Gastrocnemius medialis (tissue), 4 donors: ENCODE measurements at regions of chr10 and their contacts with region 1.

Region 1: DNA sequence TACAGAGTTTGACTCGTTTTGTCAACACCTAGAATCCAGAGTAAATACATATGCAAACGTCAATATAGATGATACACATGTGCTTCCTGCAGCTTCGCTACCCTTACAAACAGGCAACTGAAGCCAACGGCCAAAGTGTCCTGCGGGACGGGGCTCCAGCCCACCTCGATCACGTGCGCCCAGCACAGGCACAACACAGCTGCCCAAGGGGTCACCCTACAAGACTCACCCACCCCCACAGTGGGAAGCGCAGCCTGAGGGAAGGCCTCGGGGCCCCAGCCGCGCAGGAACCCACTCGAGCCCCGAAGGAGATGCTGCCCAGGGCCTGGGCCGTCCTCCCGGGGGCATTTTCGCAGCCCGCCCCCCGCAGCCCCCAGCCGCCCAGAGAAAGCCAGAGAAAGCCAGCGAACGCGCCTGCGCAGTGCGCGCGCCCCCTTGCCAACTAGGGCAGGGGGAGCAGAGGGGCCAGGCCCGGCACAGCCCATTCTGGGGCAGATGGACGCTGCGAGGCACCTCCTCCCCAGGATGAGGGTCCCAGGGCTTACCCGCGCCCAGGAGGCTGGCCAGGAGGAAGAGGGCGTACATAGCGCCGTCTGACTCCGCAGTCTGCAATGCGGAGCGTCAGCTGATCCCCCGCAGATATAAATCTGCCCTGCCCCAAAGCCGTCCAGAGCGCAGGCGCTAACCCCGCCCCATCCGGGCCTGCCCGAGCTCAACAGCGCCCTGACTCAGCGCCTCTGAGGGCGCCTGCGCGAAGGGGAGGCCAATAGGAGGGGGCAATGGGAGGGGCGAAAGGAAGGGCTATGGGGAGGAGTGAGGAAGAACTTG is at the start of gene PSAP:
- DNase-seq: peak; percentile 98 to 99
- ATAC-seq: peak; percentile 88 to 89
- H3K4me3 ChIP-seq: peak within 1 kb of the TSS; percentile 89 to 97 (median 91)
- H3K27ac ChIP-seq: peak within 1 kb of the TSS; percentile 94 to 99 (median 97)
- H3K4me1 ChIP-seq: peaks cover 48 to 49% of the 10 kb centered on the region in 2 donors
- H3K27me3 ChIP-seq: no peaks in the 10 kb centered on the region
- CTCF ChIP-seq: no peak
- POLR2A ChIP-seq: peak; percentile 100
- total RNA-seq, gene PSAP: 833 to 1,730 (median 1,179) TPM

Region 2: DNA sequence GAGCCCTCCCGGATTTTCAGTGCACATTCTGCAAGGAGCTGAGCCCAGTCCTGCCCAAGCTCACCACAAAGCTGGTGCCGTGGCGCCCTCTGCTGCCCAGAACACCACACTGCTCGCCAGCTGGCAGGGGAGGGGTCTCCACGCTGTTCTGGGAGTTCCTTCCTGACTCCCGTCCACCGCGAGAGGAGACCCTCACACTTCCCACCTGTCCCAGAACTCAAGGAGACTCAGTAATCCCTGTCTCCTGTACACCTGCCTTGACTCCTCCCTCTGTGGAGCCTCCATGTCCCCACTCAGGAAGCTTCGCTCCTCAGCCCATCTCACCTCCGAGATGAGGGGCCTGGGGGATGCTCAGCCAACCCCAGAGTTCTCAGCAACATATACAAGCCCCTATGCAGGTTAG is 142.5 kb before region 1 on chr10:
- in situ Hi-C with region 1: no loop called
- intact Hi-C with region 1: no loop called
- DNase-seq: no peak
- ATAC-seq: no peak
- H3K4me3 ChIP-seq: no peak overlapping the region
- H3K27ac ChIP-seq: no peak overlapping the region
- H3K4me1 ChIP-seq: peaks cover 11 to 14% of the 10 kb centered on the region in 2 donors
- H3K27me3 ChIP-seq: no peaks in the 10 kb centered on the region
- CTCF ChIP-seq: peak; percentile 71 to 84 (median 75)
- POLR2A ChIP-seq: no peak

Region 3: GRCh38 chr10:72248468-72249151 is 397.8 kb after region 1 on chr10:
- in situ Hi-C with region 1: loop called in 1 of 4 experiments (anchors 25 kb)
- intact Hi-C with region 1: no loop called
- DNase-seq: peak; percentile 91 to 94
- ATAC-seq: peak; percentile 85 to 87
- H3K4me3 ChIP-seq: peak overlapping the region; percentile 18 to 37 (median 34)
- H3K27ac ChIP-seq: peak overlapping the region; percentile 94 to 99 (median 98)
- H3K4me1 ChIP-seq: peaks cover 81 to 98% of the 10 kb centered on the region in 2 donors
- H3K27me3 ChIP-seq: no peaks in the 10 kb centered on the region
- CTCF ChIP-seq: no peak
- POLR2A ChIP-seq: peak; percentile 77 to 87